ENCODE measurements at regions of chr18 and their contacts with region 1.

Region 1: DNA sequence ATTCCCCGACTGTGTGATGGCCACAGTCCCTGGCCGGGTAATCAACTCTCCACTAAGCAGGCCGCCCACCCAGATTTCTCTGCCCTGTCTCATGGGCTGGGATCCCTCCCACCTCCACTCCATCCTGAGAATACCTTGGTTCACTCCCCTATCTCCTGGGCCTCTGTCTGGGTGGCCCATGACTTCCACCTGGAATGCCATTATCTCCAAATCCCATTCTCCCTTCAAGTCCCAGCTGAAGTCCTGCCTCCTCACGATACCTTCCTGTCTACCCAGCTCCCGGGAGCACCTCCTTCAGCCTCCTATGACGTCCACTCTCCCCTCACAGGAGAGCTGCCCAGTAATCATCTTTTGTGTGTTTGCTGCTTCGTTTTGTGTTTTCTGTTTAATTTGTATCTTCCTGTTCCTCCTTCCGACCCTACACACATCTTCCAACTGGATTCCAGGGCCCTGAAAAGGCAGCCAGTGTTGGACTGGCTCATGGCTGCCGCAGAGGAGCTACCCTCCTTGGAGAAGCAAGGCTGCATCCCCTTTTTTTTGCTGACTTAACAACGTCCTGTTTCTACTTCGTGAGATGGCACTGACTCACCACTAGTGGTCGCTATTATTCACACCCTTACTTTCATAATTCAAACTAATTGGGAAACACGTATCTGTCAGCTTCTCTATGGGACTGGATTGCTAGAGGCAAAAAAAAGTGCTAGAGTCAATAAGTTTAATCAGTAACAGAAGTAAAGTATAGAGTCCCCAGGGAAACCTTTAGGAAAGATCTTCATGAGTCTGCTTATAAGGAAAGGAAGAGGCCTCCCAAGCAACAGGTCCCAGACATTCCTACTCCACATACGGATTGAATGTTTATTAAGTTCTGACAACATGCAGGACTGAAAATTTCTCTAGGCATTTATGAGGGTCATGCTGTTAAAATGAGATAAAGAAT is 171.9 kb upstream of the GATA6 start:
- DNase-seq: no peak
- H3K4me3 ChIP-seq: no peak overlapping the region
- H3K27ac ChIP-seq: no peak overlapping the region
- H3K27me3 ChIP-seq: peaks cover 3% of the 10 kb centered on the region
- CTCF ChIP-seq: peak; percentile 84

Region 2: DNA sequence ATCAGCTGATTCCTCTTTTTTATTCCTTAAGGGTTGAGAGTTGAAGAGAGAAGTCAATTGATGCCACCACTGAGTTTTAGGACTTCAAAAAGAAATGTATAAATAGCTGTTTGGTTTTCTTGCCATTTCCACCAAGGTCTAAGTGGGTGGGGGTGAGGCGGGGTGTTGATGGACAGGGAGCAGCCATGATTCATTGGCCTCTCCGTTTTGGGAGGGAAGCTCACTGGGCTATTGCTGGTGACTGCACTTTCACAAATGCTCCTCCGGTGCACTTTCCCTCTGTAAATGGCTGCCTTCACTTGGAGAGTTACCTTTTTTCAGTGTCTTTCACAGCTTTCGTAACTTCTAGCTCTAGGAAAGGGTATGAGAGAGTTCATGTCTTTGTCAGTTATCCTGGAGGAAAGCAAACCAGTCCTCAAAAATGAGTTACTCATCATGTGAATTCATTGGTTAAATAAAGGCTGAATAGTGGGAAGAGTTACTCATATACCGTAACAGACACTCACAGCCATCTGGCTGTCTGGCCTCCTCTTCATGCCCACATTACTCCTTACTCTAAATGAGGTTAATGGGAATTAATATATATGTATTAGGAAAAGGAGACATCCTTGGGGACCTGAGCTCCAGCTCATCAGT is 437.6 kb after region 1 on chr18:
- CTCF ChIA-PET with region 1: no interaction called
- POLR2A ChIA-PET with region 1: interaction called, 15 read pairs
- DNase-seq: peak; percentile 39
- H3K4me3 ChIP-seq: no peak overlapping the region
- H3K27ac ChIP-seq: peak overlapping the region; percentile 63
- H3K27me3 ChIP-seq: no peaks in the 10 kb centered on the region
- CTCF ChIP-seq: no peak

Region 3: GRCh38 chr18:22563098-22563707 is 565.7 kb after region 1 on chr18:
- CTCF ChIA-PET with region 1: interaction called, 25 read pairs
- POLR2A ChIA-PET with region 1: no interaction called
- DNase-seq: peak; percentile 78
- H3K4me3 ChIP-seq: no peak overlapping the region
- H3K27ac ChIP-seq: no peak overlapping the region
- H3K27me3 ChIP-seq: no peaks in the 10 kb centered on the region
- CTCF ChIP-seq: peak; percentile 73

Measured in AG04450 (cell line).